Psoas muscle (tissue), 8 donors: ENCODE measurements at regions of chr1 and their contacts with region 1.

Region 1: GRCh38 chr1:244970661-244971551 is 106.6 kb upstream of the HNRNPU start:
- DNase-seq: peak; percentile 94 to 97
- ATAC-seq: peak; percentile 84 to 88 (median 86)
- H3K4me3 ChIP-seq: peak overlapping the region; percentile 73
- H3K27ac ChIP-seq: peak overlapping the region; percentile 98
- H3K4me1 ChIP-seq: peaks cover 23% of the 10 kb centered on the region
- H3K27me3 ChIP-seq: no peaks in the 10 kb centered on the region
- CTCF ChIP-seq: peak; percentile 45

Region 2: GRCh38 chr1:244461245-244462071 is 509.4 kb before region 1 on chr1 and contains the start of gene CATSPERE:
- intact Hi-C with region 1: loop called in 1 of 2 experiments (anchors 5 kb)
- DNase-seq: peak; percentile 91 to 94
- ATAC-seq: peak; percentile 98 to 99 (median 99)
- H3K4me3 ChIP-seq: peak within 1 kb of the TSS; percentile 68
- H3K27ac ChIP-seq: peak within 1 kb of the TSS; percentile 81
- H3K4me1 ChIP-seq: peaks cover 8% of the 10 kb centered on the region
- H3K27me3 ChIP-seq: no peaks in the 10 kb centered on the region
- CTCF ChIP-seq: no peak
- total RNA-seq, gene CATSPERE: 0.30 to 0.60 (median 0.46) TPM

Region 3: DNA sequence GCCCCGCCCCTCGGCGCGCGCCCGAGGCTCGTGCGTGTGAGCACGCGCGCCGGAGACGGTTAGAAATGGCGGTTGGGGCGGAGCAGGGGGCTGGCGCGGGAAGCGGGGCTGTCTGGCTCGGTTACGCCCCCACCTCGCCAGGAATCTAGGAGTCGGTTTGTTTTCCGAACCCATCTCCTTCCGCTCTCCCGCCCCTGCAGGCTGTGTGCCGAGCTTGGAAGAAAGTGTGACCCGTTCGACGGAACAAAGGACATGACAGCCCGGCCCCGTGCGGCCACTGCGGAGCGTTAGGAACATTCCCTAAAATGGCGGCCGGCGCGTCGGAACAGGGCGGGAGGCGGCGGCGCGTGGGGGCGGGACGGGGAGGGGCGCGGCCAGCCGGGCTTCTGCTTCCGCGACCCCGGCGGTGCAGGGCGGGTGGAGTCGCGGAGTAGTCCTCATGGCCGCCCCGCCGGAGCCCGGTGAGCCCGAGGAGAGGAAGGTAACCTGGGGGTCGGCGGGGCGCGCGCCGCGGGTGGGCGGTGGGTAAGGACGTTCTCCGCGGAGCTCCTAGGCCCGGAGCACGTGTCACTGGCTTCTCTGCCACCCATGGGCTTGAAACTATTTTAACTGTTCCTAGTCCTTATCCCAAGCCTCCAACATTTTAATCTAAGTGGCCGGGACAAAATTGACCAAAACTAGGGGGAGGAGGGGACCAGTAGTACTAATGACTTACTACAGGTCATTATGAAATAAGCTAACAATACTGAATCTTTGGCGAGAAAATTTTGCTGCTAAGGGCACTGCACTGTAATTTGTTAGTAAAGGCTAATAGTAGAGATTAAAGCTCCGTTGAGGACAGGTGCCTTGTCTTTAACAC is 135.4 kb before region 1 on chr1 and contains the start of gene COX20:
- intact Hi-C with region 1: loop called in 1 of 2 experiments (anchors 1 kb)
- DNase-seq: peak; percentile 92 to 96
- ATAC-seq: peak; percentile 84 to 86 (median 85)
- H3K4me3 ChIP-seq: peak within 1 kb of the TSS; percentile 89
- H3K27ac ChIP-seq: peak within 1 kb of the TSS; percentile 97
- H3K4me1 ChIP-seq: peaks cover 39% of the 10 kb centered on the region
- H3K27me3 ChIP-seq: no peaks in the 10 kb centered on the region
- CTCF ChIP-seq: no peak
- total RNA-seq, gene COX20: 22.6 to 35.8 (median 33.4) TPM